PC-3 (cell line): ENCODE measurements at regions of chr10 and their contacts with region 1.

Region 1: DNA sequence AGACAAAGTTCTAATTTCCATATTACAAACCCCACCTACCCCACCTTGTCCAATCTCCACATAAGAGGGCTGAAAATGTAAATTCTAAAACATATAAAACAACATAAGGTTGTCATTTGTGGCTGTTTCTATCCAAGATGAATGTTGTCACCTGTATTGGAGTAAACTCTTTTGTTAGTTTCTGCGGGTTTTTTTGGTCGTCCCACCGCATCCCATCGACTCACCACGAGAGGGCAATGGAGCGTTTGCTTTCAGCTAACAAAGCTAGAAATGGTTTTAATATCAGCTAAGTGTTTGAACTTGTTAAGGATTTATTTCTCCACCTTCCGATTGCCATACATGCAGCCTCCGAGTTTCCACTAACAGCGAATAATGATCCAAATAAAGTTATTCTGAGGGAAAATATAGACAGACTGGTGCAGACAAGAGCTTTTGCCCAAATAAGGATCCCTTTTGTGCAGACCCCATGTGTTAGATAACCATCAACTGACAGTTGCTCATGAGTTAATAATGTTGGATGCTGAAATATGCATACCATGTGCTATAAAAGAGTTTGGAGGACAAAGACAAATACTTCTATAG is 137.2 kb downstream of the ARID5B start:
- DNase-seq: peak; percentile 100
- ATAC-seq: peak; percentile 50
- H3K4me3 ChIP-seq: peak overlapping the region; percentile 46
- H3K27ac ChIP-seq: peak overlapping the region; percentile 85
- H3K4me1 ChIP-seq: peaks cover 54% of the 10 kb centered on the region
- H3K27me3 ChIP-seq: no peaks in the 10 kb centered on the region
- CTCF ChIP-seq: peak; percentile 100

Region 2: GRCh38 chr10:61896854-61897661 is 141.6 kb before region 1 on chr10:
- CTCF ChIA-PET with region 1: interaction called, 62 read pairs
- POLR2A ChIA-PET with region 1: interaction called, 25 read pairs
- intact Hi-C with region 1: no loop called
- DNase-seq: peak; percentile 91
- ATAC-seq: no peak; the same call in 1 of the 2 replicates
- H3K4me3 ChIP-seq: no peak overlapping the region
- H3K27ac ChIP-seq: no peak overlapping the region
- H3K4me1 ChIP-seq: peaks cover 38% of the 10 kb centered on the region
- H3K27me3 ChIP-seq: no peaks in the 10 kb centered on the region
- CTCF ChIP-seq: peak; percentile 99

Region 3: GRCh38 chr10:62050893-62051433 is 12.3 kb after region 1 on chr10:
- CTCF ChIA-PET with region 1: interaction called, 52 read pairs
- POLR2A ChIA-PET with region 1: interaction called, 4 read pairs
- intact Hi-C with region 1: no loop called
- DNase-seq: peak; percentile 100
- ATAC-seq: peak; percentile 41
- H3K4me3 ChIP-seq: peak overlapping the region; percentile 63
- H3K27ac ChIP-seq: peak overlapping the region; percentile 77
- H3K4me1 ChIP-seq: peaks cover 60% of the 10 kb centered on the region
- H3K27me3 ChIP-seq: no peaks in the 10 kb centered on the region
- CTCF ChIP-seq: no peak

Region 4: DNA sequence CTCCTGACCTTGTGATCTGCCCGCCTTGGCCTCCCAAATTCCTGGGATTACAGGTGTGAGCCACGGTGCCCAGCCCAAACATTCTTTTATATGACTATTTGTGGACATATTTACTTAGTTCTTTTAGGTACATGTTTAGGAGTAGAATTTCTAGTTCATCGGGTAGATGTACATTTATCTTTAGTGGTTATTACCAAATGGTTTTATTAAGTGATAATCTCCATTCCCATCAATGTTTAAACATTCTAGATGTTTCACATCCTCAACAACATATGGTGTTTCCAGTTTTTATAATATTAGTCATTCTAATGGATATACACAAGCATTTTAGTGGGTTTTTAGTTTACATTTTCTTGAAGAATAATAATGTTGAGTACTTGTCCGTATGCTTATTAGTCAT is 98.2 kb after region 1 on chr10:
- CTCF ChIA-PET with region 1: no interaction called
- POLR2A ChIA-PET with region 1: interaction called, 3 read pairs
- intact Hi-C with region 1: loop called (anchors 2 kb)
- DNase-seq: peak; percentile 100
- ATAC-seq: peak; percentile 85
- H3K4me3 ChIP-seq: no peak overlapping the region
- H3K27ac ChIP-seq: peak overlapping the region; percentile 76
- H3K4me1 ChIP-seq: peaks cover 25% of the 10 kb centered on the region
- H3K27me3 ChIP-seq: no peaks in the 10 kb centered on the region
- CTCF ChIP-seq: no peak

Region 5: DNA sequence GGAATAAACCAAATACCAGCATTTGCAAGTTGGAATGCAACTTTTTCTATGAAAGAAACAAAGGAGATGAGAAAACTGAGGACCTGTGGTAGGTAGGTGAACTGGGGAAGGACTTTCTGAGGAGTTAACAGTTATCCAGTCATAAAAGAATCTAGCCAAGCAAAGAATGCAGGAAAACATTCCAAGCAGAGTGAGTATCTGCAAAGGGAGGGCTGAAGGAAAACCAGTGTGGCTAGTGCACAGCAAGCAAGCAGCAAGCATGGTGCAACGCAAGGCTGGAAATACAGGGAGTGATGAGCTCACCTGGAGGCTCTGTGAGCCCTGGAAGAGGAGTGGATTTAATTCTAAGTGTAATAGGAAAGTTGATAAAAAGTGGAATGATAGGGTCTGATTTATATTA is 185.9 kb after region 1 on chr10:
- CTCF ChIA-PET with region 1: no interaction called
- POLR2A ChIA-PET with region 1: no interaction called
- intact Hi-C with region 1: no loop called
- DNase-seq: peak; percentile 90
- ATAC-seq: peak; percentile 88
- H3K4me3 ChIP-seq: no peak overlapping the region
- H3K27ac ChIP-seq: no peak overlapping the region
- H3K4me1 ChIP-seq: peaks cover 12% of the 10 kb centered on the region
- H3K27me3 ChIP-seq: no peaks in the 10 kb centered on the region
- CTCF ChIP-seq: no peak

Region 6: DNA sequence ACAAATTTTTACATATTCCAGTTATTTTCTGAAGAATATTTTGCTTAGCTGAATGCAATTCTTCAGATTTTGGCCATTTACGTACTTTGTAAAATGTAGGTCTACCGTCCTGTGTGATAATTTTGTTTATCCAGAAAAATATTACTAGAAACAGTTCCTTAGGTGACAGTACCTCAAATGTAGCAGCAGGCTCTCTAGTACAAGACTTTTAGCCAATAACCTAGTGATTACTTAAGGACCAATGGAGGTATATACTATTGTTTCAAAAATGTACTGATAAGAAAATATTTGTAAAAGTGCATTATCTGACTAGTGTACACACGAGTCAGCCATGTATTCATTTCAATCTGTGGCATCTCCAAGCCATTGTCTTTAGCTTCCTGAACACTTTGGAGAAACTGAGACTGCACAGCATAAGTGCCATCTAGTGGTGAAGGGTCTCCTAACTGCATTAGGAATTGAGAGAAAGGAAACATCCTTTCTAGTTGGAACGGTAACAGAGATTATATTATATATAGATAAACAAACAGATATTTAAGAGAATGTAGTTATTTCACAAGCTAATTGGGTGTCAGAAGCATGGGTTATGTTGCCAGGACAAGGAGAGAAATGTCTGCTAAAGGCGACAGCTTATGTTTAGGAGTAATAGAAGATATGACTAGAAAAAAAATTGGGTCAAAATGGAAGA is 206.2 kb after region 1 on chr10:
- CTCF ChIA-PET with region 1: interaction called, 68 read pairs
- POLR2A ChIA-PET with region 1: interaction called, 8 read pairs
- intact Hi-C with region 1: loop called (anchors 1 kb)
- DNase-seq: peak; percentile 99
- ATAC-seq: peak; percentile 42
- H3K4me3 ChIP-seq: no peak overlapping the region
- H3K27ac ChIP-seq: peak overlapping the region; percentile 3
- H3K4me1 ChIP-seq: peaks cover 60% of the 10 kb centered on the region
- H3K27me3 ChIP-seq: no peaks in the 10 kb centered on the region
- CTCF ChIP-seq: peak; percentile 100

Region 7: DNA sequence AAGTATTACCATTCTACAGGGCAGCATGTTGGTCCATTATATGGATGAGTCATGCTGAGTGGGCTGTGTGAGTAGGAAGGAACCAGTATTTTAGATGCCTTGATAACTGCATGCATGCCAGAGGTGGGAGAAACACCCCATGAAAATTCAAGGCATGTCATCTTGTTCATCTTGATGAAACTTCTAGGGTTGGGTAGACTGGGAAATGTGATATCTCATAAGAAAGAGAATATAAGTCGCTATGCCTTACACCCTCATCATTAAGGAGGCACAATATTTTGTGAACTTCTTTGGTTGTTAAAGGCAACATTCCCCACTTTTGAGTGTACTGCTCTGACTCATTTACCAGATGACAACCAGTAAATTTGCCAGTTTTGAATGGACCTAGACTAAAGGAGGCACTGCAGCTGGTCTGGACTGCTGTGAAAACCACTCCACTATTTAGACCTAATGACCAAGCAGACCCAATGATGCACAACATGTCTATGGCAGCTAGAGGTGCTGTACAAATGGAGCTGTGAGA is 383.4 kb after region 1 on chr10:
- CTCF ChIA-PET with region 1: no interaction called
- POLR2A ChIA-PET with region 1: no interaction called
- intact Hi-C with region 1: loop called (anchors 1 kb)
- DNase-seq: peak; percentile 94
- ATAC-seq: peak; percentile 69
- H3K4me3 ChIP-seq: no peak overlapping the region
- H3K27ac ChIP-seq: peak overlapping the region; percentile 4
- H3K4me1 ChIP-seq: peaks cover 26% of the 10 kb centered on the region
- H3K27me3 ChIP-seq: no peaks in the 10 kb centered on the region
- CTCF ChIP-seq: peak; percentile 51; the same call in 1 of the 2 replicates